ENCODE measurements at regions of chr11 and their contacts with region 1.

Region 1: GRCh38 chr11:7442588-7443215 is 42.6 kb upstream of the OLFML1 start:
- DNase-seq: peak; percentile 81
- ATAC-seq: peak; percentile 90

Region 2: DNA sequence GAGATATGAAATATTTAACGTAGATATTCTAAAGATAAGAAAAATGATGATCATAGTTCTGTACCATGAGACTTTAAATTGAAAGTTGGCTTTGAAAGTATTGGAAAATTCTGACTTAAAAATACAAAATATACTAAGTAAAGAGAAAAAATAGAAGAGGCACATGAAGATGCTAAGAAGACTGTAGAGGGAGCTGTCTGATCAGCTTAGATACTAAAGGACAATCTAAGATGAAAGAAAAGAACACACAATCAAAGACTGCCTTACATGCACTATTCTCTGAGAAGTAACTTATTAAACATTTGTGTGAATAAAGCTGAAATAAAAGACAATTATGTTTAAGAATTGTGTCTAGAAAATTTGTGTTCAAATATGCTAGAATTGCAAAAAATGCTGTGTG is 298.8 kb before region 1 on chr11:
- intact Hi-C with region 1: loop called (anchors 5 kb)
- DNase-seq: no peak
- ATAC-seq: no peak

Measured in Right ventricle myocardium superior (tissue), 1 donor.